Activated naive CD4-positive, alpha-beta T cell treated with anti-CD3 and anti-CD28 coated beads for 36 hours (primary cell): ENCODE measurements at regions of chr1 and their contacts with region 1.

Region 1: DNA sequence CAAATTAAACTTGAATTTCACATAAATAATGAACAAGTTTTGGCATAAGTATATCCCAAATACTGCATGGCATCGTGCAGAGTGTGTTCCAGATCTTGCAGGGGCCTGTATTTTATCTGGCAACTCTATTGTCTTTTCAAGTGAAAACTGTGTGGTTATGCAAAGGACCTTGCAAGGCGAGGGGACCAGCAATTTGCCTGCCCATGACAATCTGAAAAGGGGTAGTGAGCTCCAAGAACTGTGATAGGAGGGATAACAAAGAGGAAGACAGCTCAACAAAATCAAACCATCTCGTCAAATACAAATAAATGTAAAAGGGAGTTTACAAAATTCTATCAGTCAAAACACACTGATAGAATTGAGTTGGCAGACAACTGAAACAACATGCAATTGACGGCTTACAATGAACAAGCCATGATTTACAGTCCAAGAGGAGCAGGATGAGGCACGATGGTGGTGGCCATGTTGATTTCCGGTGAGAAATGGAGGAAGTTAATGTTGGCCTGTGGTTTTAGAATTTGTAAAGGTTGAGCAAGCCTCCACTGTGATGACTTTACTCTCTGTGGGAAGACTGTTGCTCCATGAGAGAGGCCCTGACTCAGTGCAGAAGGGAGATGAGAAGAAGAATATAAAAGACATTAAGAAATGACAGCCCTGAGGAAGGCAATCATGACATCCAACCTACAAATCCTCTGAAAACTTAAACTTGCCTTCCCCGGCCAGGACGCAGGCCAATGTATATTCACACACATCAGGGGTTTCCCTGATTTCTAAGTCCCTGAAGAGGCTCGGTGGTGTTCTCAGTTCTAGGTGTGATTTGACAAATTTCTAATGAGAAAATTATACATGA is 132.2 kb downstream of the ADSS2 start:
- DNase-seq: peak; percentile 70
- H3K4me3 Mint-ChIP-seq: no peak overlapping the region
- H3K27ac Mint-ChIP-seq: peak overlapping the region; percentile 14
- H3K4me1 Mint-ChIP-seq: peaks cover 13% of the 10 kb centered on the region
- H3K27me3 Mint-ChIP-seq: no peaks in the 10 kb centered on the region

Region 2: DNA sequence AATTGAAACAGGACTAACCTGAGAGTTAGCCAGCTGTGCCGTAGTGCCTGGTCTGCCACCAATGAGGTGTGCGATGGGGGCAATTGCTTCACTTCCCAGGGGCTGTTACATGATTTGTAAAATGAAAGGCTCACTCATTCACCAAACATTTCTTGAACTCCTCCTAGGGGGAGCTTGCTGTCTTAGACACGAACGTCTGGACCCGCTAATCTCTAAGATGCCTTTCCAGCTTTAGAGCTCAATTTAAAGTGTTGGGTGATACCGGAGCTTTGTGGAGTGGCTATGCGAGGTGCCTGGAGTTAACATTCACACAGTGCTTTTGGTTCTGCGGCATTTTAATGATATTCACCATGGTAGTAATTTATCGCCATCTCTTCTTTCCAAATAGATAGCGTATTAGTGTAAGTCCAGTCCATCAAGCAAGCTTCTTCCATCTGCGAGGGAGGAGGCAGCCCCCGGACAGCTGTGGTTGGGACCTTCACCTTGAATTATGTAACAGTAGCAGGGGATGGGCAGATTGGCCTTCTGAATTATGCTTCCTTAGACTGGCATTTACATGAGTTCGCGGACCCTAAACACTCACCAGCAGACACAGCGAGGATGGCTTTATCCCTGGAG is 47.7 kb before region 1 on chr1:
- CTCF ChIA-PET with region 1: no interaction called
- intact Hi-C with region 1: no loop called
- DNase-seq: no peak
- H3K4me3 Mint-ChIP-seq: no peak overlapping the region
- H3K27ac Mint-ChIP-seq: no peak overlapping the region
- H3K4me1 Mint-ChIP-seq: no peaks in the 10 kb centered on the region
- H3K27me3 Mint-ChIP-seq: no peaks in the 10 kb centered on the region

Region 3: DNA sequence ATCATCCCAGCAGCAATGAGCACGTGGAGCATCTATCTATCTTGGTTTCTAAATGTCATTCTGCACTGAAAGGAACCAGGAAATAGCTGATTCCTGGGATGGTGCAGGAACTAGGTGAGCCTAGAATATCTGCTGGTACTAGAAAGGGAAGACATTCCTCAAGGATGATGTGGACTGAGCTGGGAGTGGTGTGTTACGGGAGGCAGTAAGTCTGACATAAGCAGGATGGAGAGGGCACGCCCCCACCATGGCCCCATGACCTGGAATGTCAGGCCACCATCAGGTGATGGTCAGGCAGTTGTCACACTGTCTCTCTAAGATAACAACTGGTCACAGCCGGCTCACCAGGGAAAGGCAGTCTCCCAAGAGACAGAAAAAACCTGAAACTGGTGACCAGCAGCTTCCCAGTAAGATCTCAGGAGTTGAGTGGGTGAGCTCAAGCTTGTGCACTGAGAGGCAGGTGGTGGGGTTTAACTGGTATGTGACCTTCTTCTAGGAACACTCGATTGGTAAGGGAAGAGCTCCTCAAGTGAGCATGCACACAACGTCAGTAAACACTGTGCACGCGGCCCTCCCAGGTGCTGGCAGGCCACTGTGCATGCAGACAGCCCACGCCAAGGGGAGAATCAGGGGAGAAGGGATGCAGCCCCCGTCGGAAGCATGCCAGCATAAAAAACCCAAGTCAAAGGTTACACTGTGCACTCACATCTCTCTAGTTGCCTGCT is 16.5 kb before region 1 on chr1:
- CTCF ChIA-PET with region 1: interaction called, 3 read pairs
- intact Hi-C with region 1: loop called (anchors 1 kb)
- DNase-seq: no peak
- H3K4me3 Mint-ChIP-seq: no peak overlapping the region
- H3K27ac Mint-ChIP-seq: no peak overlapping the region
- H3K4me1 Mint-ChIP-seq: peaks cover 7% of the 10 kb centered on the region
- H3K27me3 Mint-ChIP-seq: peaks cover 3% of the 10 kb centered on the region

Region 4: GRCh38 chr1:244353551-244354091 is 34.1 kb after region 1 on chr1:
- CTCF ChIA-PET with region 1: no interaction called
- intact Hi-C with region 1: loop called (anchors 2 kb)
- DNase-seq: peak; percentile 77
- H3K4me3 Mint-ChIP-seq: no peak overlapping the region
- H3K27ac Mint-ChIP-seq: peak overlapping the region; percentile 50
- H3K4me1 Mint-ChIP-seq: peaks cover 26% of the 10 kb centered on the region
- H3K27me3 Mint-ChIP-seq: no peaks in the 10 kb centered on the region